Heart left ventricle (tissue), 16 donors: ENCODE measurements at regions of chr18 and their contacts with region 1.

Region 1: DNA sequence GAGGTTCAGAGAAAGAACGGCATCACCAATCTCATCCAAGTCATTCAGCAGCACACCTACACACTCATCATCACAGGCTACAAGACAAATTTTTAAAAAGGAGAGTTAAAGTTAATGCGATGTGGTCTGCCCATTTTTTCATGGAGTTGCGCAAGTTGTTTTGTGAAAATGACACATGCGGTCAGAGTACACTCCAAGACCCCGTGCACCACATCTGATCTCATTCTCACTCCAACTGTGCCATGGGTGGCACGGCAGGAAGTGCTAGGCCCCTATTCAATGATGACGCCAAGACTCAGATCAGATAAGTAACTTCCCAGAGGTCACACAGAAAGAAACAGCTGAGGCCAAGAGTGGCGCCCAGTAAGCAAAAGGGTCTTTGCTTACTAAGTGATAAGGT is 119.8 kb downstream of the LAMA1 start:
- DNase-seq: no peak
- ATAC-seq: no peak
- H3K4me3 ChIP-seq: no peak overlapping the region
- H3K27ac ChIP-seq: no peak overlapping the region
- H3K4me1 ChIP-seq: no peaks in the 10 kb centered on the region
- H3K27me3 ChIP-seq: peaks cover 0 to 16% (median 0%) of the 10 kb centered on the region in 9 donors
- CTCF ChIP-seq: no peak
- POLR2A ChIP-seq: no peak

Region 2: DNA sequence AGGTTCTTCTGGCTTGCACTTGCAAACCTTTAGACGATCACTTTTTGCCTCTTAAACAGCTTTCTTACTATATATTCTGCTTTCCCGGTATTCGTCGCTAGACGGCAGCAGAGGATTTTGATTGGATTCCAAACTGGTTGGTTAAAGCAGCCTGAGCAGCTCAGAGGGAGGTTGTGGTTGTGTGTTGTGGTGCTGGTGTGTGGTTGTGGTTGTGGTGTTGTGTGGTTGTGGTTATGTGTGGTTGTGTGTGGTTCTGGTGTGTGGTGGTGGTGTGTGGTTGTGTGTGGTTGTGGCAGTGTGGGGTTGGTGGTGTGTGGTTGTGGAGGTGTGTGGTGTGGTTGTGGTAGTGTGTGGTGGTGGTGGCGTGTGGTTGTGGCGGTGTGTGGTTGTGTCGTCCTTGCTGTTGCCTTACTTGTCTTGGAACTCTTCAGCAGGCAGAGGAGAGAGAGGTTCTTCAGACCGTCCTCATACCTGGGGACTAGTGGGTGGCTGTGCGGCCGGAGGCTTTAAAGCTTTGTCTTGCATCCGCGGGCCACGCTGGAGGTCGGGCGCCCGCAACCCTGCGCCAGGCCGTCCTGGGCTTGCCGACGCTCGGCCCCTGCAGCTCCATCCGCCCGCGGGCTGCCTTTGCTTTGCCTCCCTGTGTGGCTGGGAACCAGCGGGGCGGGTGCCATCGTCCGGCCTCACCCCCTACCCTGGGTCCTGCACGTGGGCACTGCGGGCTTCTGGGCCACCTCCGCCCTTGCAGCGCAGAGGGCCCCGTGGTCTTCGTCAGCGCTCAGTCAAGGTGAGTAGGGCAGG is 77.5 kb before region 1 on chr18:
- intact Hi-C with region 1: loop called in 1 of 10 experiments (anchors 2 kb)
- DNase-seq: no peak
- ATAC-seq: peak in 2 of 4 donors; percentile 12 to 59
- H3K4me3 ChIP-seq: no peak overlapping the region
- H3K27ac ChIP-seq: no peak overlapping the region
- H3K4me1 ChIP-seq: no peaks in the 10 kb centered on the region
- H3K27me3 ChIP-seq: peaks cover 0 to 8% (median 0%) of the 10 kb centered on the region in 9 donors
- CTCF ChIP-seq: peak; percentile 28 to 64 (median 47)
- POLR2A ChIP-seq: no peak